AG04450 (cell line): ENCODE measurements at regions of chr1 and their contacts with region 1.

Region 1: DNA sequence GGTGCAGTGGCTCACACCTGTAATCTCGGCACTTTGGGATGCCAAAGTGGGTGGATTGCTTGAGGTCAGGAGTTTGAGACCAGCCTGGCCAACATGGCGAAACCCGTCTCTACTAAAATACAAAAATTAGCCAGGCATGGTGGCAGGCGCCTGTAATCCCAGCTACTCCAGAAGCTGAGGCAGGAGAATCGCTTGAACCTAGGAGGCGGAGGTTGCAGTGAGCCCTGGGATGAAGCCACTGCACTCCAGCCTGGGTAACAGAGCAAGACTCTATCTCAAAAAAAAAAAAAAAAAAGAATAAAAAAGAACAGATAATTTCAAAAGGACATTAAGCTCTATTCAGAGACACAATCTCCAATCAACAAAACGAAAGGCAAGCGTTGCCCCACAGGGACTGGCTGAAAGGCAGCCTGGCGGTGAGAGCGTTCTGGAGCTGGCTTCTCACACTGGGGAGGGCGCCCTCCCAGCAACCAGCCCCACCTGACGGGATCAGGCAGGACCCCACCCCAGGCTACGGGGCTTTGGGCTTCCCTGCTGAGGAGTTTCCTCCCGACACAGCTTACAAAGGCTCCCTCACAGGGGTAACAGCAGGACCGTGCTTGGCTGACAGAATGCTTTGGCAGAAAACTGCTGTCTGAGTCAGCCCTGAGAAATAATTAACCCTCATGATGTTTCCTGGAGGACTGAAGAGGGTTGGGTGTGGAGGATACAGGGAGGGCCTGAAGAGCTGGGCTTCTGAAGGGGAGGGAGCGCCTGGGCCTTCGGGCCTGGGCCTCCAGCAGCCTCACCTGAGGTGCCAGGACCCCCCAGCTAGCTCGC is 31.1 kb upstream of the SRP9 start:
- DNase-seq: peak; percentile 74
- H3K4me3 ChIP-seq: peak overlapping the region; percentile 56
- H3K27ac ChIP-seq: peak overlapping the region; percentile 88
- H3K27me3 ChIP-seq: no peaks in the 10 kb centered on the region
- CTCF ChIP-seq: peak; percentile 19

Region 2: DNA sequence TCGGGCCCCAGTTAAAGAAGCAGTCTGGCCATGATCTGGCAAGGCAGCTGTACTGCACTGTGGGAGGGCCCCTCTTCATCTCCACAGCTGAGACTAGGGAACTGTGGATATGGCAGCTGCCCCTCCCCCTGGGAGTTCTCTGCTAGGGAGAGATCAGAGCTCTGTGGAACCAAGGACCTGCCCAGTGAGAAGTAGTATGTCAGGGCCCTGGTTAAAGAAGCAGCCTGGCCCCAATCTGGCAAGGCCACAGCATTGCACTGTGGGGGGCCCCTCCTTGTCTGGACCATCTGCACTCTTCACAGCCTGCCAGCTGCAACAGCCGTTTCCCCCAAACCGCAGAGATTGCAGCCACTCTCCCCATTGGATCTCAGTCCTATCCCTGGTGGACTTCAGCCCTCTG is 608.6 kb before region 1 on chr1:
- CTCF ChIA-PET with region 1: no interaction called
- POLR2A ChIA-PET with region 1: no interaction called
- DNase-seq: no peak
- H3K4me3 ChIP-seq: no peak overlapping the region
- H3K27ac ChIP-seq: no peak overlapping the region
- H3K27me3 ChIP-seq: no peaks in the 10 kb centered on the region
- CTCF ChIP-seq: no peak

Region 3: GRCh38 chr1:225766967-225767633 is 20.5 kb after region 1 on chr1:
- CTCF ChIA-PET with region 1: interaction called, 5 read pairs
- POLR2A ChIA-PET with region 1: interaction called, 40 read pairs
- DNase-seq: peak; percentile 74
- H3K4me3 ChIP-seq: 0 out of 2 replicates have a peak overlapping the region, but pooled peaks have one; percentile 4
- H3K27ac ChIP-seq: peak overlapping the region; percentile 89
- H3K27me3 ChIP-seq: no peaks in the 10 kb centered on the region
- CTCF ChIP-seq: no peak